Mammary epithelial cell (primary cell): ENCODE measurements at regions of chr1 and their contacts with region 1.

Region 1: DNA sequence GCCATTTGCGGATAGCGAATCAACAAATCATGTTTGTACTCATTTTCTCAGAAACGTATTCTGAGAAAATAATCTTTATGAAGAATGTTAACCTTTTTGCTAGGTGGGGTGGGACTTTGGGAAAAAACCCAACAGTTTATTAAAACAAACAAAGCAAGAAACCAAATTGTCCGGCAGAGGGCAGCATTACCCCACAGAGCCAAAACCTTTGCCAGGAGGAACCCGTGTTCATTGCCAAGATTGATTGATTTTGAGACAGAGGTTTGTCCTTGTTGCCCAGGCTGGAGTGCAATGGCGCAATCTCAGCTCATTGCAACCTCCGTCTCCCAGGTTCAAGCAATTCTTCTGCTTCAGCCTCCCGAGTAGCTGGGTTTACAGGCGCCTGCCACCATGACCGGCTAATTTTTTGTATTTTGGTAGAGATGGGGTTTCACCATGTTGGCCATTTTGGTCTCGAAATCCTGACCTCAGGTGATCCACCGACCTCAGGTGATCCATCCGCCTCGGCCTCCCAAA is 70.8 kb upstream of the RHOU start:
- DNase-seq: peak; percentile 48
- H3K4me3 ChIP-seq: no peak overlapping the region
- H3K27ac ChIP-seq: no peak overlapping the region
- H3K4me1 ChIP-seq: no peaks in the 10 kb centered on the region
- H3K27me3 ChIP-seq: peaks cover 5% of the 10 kb centered on the region
- CTCF ChIP-seq: peak; percentile 63 to 80

Region 2: DNA sequence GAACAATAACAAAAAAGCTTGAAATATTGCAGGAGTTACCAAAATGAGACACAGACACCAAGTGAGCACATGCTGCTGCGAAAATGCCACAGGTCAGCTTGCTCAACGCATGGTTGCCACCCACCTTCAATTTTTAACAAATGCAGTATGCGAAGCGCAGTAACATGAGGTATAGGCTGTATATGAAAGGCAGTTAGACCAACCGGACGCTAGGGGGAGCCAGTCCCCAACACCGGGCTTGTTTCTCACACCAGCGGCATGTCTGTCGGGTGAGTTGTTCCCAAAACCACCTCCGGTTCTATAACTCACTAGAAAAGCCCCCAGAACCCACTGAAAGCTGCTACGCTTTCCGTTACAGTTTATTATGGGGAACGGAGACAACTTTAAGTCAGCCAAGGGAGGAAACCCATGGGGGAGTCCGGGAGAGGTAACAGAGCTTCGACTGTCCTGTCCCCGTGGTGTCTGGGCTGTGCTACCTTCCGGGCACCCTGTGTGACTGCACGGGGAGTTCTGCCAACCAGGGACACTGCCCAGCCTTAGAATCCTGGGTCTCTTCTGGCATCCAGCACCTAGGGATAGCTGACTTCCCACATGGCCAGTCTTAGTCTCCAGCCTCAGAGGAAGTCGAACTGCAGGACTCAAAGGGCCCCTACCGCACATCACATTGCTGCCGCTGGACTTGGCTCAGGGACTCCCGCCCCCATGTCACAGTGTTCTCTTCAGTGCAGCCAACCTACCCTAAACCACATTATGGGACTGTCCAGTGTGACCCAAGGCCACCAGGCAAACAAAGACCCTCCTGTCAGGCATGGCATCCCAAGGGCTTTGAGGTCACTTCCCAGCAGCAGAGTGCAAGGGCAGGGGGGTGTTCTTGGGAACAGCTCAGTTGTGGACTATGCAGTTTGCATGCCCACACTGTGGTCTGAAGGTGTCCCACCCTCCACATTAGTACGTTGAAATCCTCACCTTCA is 163.3 kb before region 1 on chr1:
- CTCF ChIA-PET with region 1: no interaction called
- dilution Hi-C with region 1: no loop called
- in situ Hi-C with region 1: no loop called
- intact Hi-C with region 1: loop called (anchors 10 kb)
- DNase-seq: peak; percentile 81
- H3K4me3 ChIP-seq: no peak overlapping the region
- H3K27ac ChIP-seq: no peak overlapping the region
- H3K4me1 ChIP-seq: peaks cover 9% of the 10 kb centered on the region
- H3K27me3 ChIP-seq: no peaks in the 10 kb centered on the region
- CTCF ChIP-seq: peak; percentile 92 to 95

Region 3: DNA sequence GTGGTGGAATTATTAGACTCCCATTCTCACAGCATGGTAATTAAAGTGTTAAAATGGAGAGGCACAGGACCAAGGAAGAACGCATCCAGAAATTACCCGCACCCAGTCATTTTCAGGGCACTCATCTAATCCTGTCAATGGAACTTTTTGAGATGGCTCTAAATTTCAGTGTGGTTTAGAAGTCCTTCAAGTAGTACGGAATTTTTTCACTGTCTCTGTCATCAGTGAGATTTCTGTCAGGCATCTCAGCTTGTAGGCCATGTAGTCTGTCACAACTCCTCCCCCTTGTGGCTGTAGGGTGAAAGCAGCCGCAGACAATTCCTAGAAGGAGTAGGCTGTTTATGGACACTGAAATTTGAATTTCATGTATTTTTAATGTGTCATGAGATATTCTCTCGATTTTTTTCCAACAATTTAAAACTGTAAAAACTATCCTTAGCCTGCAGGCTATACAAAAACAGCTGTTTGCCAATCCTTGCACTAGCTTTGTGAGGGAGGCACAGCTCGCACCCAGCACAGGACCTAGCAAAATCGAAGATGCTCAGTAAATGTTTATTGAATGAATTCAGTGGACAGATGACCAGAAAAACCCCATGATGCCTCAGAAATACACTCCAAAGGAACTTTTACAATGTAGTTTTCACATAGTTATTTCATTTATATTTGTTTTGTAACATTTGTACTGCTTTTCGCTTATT is 850.3 kb after region 1 on chr1:
- CTCF ChIA-PET with region 1: no interaction called
- dilution Hi-C with region 1: no loop called
- in situ Hi-C with region 1: no loop called
- intact Hi-C with region 1: loop called (anchors 10 kb)
- DNase-seq: peak; percentile 57
- H3K4me3 ChIP-seq: no peak overlapping the region
- H3K27ac ChIP-seq: no peak overlapping the region
- H3K4me1 ChIP-seq: peaks cover 1% of the 10 kb centered on the region
- H3K27me3 ChIP-seq: no peaks in the 10 kb centered on the region
- CTCF ChIP-seq: peak; percentile 77 to 88